H1 (cell line): ENCODE measurements at regions of chr9 and their contacts with region 1.

Region 1: GRCh38 chr9:122940603-122941559 is at the start of gene RABGAP1:
- DNase-seq: peak; percentile 96
- H3K4me3 ChIP-seq: peak within 1 kb of the TSS; percentile 83 to 93 (median 90)
- H3K27ac ChIP-seq: peak within 1 kb of the TSS; percentile 96
- H3K4me1 ChIP-seq: peaks cover under 1 to 3% (median 2%) of the 10 kb centered on the region in 4 experiments; a peak in 4 of 7 replicates
- H3K27me3 ChIP-seq: no peaks in the 10 kb centered on the region
- CTCF ChIP-seq: no peak
- EP300 ChIP-seq: no peak
- POLR2A ChIP-seq: peak; percentile 94 to 95
- RAD21 ChIP-seq: no peak
- total RNA-seq, gene RABGAP1: 33.3 and 38.3 TPM in 2 replicates

Region 2: DNA sequence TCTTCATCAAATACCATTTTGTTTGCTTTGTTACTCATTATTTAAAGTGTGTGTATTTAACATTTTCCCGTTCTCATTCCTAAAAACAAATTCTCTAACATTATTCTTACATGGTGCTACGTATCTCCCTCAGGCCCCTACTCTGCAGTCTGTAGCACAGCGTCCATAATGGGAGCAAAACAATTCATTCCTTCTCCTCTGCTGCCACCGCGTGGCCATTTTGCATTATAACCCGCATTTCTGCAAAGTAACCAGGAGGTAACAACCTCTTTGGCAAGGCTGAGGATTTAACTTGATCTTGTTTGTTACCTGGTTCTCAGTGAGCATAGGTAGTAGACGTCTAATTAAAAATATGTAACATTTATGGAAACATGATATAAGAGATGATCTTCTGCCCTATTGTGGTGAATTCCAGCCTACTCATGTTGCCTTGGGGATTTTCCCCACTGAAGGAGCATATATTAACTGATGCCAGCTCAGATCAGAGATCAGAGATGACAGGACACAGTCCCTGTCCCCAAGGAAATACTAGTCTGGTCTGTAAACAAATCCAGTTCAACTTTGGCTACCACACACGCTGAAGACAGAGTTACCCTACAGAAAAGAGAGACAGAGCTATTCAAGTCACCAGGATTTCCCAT is 130.5 kb before region 1 on chr9:
- CTCF ChIA-PET with region 1: no interaction called
- POLR2A ChIA-PET with region 1: no interaction called
- DNase-seq: peak; percentile 29 to 81
- H3K4me3 ChIP-seq: no peak overlapping the region
- H3K27ac ChIP-seq: no peak overlapping the region
- H3K4me1 ChIP-seq: peaks cover 0 to 3% (median 2%) of the 10 kb centered on the region in 4 experiments; a peak in 4 of 7 replicates
- H3K27me3 ChIP-seq: no peaks in the 10 kb centered on the region
- CTCF ChIP-seq: peak; percentile 49 to 87 (median 84)
- EP300 ChIP-seq: no peak
- POLR2A ChIP-seq: no peak
- RAD21 ChIP-seq: peak; percentile 97

Region 3: GRCh38 chr9:122904823-122905710 is 35.8 kb before region 1 on chr9 and contains the start of gene RC3H2:
- CTCF ChIA-PET with region 1: no interaction called
- POLR2A ChIA-PET with region 1: interaction called, 10 read pairs
- DNase-seq: peak; percentile 94 to 100
- H3K4me3 ChIP-seq: peak within 1 kb of the TSS; percentile 89 to 93 (median 92)
- H3K27ac ChIP-seq: peak within 1 kb of the TSS; percentile 79
- H3K4me1 ChIP-seq: no peaks in the 10 kb centered on the region; a peak in 1 of 7 replicates
- H3K27me3 ChIP-seq: no peaks in the 10 kb centered on the region
- CTCF ChIP-seq: no peak
- EP300 ChIP-seq: no peak
- POLR2A ChIP-seq: peak; percentile 95 to 97
- RAD21 ChIP-seq: no peak
- total RNA-seq, gene RC3H2: 38.4 and 40.0 TPM in 2 replicates

Region 4: GRCh38 chr9:122912964-122913673 is 27.8 kb before region 1 on chr9 and contains the start of gene ZBTB6:
- CTCF ChIA-PET with region 1: no interaction called
- POLR2A ChIA-PET with region 1: interaction called, 52 read pairs
- DNase-seq: peak in 1 of 2 experiments; percentile 76
- H3K4me3 ChIP-seq: peak within 1 kb of the TSS; percentile 76 to 91 (median 88)
- H3K27ac ChIP-seq: peak within 1 kb of the TSS; percentile 93
- H3K4me1 ChIP-seq: no peaks in the 10 kb centered on the region; a peak in 2 of 7 replicates
- H3K27me3 ChIP-seq: no peaks in the 10 kb centered on the region
- CTCF ChIP-seq: no peak
- EP300 ChIP-seq: no peak
- POLR2A ChIP-seq: peak; percentile 62 to 95
- RAD21 ChIP-seq: 0 out of 4 replicates have a peak, but pooled peaks of 1 of the 2 experiments have one; percentile 10
- total RNA-seq, gene ZBTB6: 9.3 and 10.0 TPM in 2 replicates

Region 5: DNA sequence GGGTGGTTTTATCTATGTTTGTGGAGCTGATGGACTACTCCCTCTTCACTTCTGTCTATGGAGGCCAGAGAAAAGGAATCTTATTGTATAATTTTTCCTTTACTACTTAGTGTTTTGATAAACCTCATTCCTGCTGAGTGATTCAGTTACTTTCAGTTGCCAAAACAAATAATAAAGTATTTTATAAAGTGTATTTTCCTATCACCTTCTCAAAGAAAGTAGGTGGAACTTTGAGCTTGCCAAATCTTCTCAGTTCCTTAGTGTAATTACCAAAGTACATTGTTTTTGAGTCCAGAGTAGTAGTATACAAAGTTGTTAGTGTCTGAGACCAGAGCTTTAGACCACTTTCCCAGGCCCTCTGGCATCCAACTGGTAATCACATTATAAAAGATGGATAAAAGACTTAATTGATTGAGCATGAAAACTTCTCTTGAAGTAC is 13.4 kb after region 1 on chr9:
- CTCF ChIA-PET with region 1: no interaction called
- POLR2A ChIA-PET with region 1: interaction called, 26 read pairs
- DNase-seq: no peak
- H3K4me3 ChIP-seq: no peak overlapping the region
- H3K27ac ChIP-seq: no peak overlapping the region
- H3K4me1 ChIP-seq: peaks cover 0 to 10% (median 2%) of the 10 kb centered on the region in 4 experiments; a peak in 3 of 7 replicates
- H3K27me3 ChIP-seq: no peaks in the 10 kb centered on the region
- CTCF ChIP-seq: no peak
- EP300 ChIP-seq: no peak
- POLR2A ChIP-seq: no peak
- RAD21 ChIP-seq: no peak